G401 (cell line): ENCODE measurements at regions of chr16 and their contacts with region 1.

Region 1: GRCh38 chr16:84369720-84370565 is 1.6 kb downstream of the ATP2C2 start:
- DNase-seq: no peak

Region 2: GRCh38 chr16:84464967-84465553 is 95.1 kb after region 1 on chr16:
- in situ Hi-C with region 1: loop called (anchors 5 kb)
- DNase-seq: no peak